Activated B cell treated with CpG ODN at 0.5 μM for 24 hours (primary cell): ENCODE measurements at regions of chr12 and their contacts with region 1.

Region 1: DNA sequence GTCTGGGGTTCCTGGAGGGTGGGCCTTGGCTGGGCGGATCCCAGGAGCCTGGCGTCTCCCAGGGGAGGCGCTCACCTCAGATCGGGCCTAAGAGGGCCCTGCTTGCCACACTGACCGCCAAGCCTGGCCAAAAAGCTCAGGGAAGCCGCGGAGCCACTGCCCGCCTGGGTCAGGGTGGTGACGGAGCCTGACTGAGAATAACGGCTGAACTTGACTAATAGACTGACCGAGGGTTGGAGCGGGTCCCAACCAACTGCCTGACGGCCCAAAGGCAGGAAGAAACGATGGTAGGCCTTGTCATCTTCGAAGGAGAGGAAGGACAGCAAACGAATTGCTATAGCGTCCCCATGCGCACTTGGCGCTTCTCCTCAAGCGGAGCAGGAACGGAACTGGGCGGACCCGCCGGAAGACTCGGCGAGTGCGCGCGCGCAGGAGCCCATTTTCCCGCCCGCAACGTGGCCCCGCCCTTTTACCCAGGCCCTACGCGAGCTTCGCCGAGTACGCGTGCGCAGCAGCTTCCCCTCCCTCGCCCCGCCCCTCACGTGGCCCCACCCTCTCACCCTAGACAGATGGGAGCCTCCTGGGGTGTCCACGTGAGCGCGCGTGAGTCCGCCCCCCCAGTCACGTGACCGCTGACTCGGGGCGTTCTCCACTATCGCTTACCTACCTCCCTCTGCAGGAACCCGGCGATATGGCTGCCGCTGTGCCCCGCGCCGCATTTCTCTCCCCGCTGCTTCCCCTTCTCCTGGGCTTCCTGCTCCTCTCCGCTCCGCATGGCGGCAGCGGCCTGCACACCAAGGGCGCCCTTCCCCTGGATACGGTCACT is at the starts of genes ERP29 and TMEM116:
- DNase-seq: peak; percentile 99
- ATAC-seq: peak; percentile 72
- H3K4me3 Mint-ChIP-seq: peak within 1 kb of the TSS; percentile 96
- H3K27ac Mint-ChIP-seq: peak within 1 kb of the TSS; percentile 99
- H3K4me1 Mint-ChIP-seq: peaks cover 63% of the 10 kb centered on the region
- H3K27me3 Mint-ChIP-seq: no peaks in the 10 kb centered on the region
- CTCF ChIP-seq: no peak
- total RNA-seq, gene ERP29: 133 and 135 TPM in 2 replicates
- total RNA-seq, gene TMEM116: 6.4 and 10.5 TPM in 2 replicates

Region 2: DNA sequence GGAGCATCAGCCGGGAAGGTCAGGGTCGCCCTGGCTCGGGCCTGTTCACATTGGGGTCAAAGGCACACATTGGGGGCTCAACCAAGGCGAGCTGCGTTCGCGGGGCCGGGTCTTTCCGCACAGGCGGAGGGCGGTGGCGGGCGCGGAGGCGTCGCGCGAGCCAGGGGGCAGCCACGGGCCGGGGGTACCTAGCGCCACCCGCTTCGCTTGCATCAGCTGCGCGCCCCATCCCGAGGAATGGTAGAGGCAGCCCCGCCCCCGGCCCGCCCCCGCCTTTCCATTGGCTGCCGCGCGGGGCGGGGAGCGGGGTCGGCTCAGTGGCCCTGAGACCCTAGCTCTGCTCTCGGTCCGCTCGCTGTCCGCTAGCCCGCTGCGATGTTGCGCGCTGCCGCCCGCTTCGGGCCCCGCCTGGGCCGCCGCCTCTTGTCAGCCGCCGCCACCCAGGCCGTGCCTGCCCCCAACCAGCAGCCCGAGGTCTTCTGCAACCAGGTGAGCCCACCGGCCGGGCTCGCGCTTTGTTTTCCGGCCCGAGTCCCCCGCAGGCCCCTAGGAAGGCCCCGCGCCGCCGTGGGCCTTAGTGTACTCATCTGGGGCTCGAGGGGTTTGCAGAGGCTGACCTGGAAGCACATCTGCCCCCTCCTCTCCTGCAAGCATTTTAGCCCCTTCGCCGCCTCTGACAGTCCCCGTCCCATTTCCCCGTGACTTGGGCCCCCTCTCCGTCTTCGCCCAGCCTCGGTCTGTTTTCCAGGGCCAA is 246.2 kb before region 1 on chr12 and contains the start of gene ALDH2:
- CTCF ChIA-PET with region 1: no interaction called
- POLR2A ChIA-PET with region 1: interaction called, 16 read pairs
- intact Hi-C with region 1: loop called (anchors 5 kb)
- DNase-seq: peak; percentile 60
- ATAC-seq: peak; percentile 68
- H3K4me3 Mint-ChIP-seq: peak within 1 kb of the TSS; percentile 87
- H3K27ac Mint-ChIP-seq: peak within 1 kb of the TSS; percentile 88
- H3K4me1 Mint-ChIP-seq: peaks cover 55% of the 10 kb centered on the region
- H3K27me3 Mint-ChIP-seq: no peaks in the 10 kb centered on the region
- CTCF ChIP-seq: no peak
- total RNA-seq, gene ALDH2: 36.0 and 37.4 TPM in 2 replicates

Region 3: GRCh38 chr12:111942557-111942956 is 70.4 kb before region 1 on chr12:
- CTCF ChIA-PET with region 1: interaction called, 13 read pairs
- POLR2A ChIA-PET with region 1: interaction called, 37 read pairs
- intact Hi-C with region 1: loop called (anchors 1 kb)
- DNase-seq: no peak
- ATAC-seq: no peak
- H3K4me3 Mint-ChIP-seq: no peak overlapping the region
- H3K27ac Mint-ChIP-seq: no peak overlapping the region
- H3K4me1 Mint-ChIP-seq: peaks cover 2% of the 10 kb centered on the region
- H3K27me3 Mint-ChIP-seq: no peaks in the 10 kb centered on the region
- CTCF ChIP-seq: no peak

Region 4: DNA sequence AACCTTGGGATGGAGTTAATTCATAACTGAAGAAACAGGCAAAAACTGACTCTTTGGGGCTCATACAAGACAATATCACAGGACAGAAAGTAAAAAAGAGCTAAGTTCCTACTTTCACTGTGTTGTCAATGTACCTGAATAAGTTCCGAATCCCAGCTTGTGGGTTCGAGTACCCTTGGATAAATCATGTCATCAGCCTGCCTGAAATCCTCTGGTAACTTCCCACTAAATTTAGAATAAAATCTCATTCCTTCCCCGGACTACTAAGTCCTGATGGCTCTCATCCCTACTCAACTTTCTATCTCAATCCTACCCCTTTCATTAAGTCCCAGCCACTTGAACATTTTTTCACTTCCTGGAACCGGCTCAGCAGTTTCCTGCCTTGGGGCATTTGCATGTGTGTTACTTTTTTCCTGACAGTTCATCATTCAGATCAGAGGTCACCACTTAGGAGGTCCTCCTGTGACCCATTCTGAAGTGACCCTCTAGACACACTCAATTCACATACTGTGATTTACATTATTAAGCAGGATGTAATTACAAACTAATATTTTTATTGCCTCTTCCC is 12.9 kb after region 1 on chr12:
- CTCF ChIA-PET with region 1: interaction called, 3 read pairs
- POLR2A ChIA-PET with region 1: interaction called, 5 read pairs
- intact Hi-C with region 1: loop called (anchors 2 kb)
- DNase-seq: no peak
- ATAC-seq: peak; percentile 56
- H3K4me3 Mint-ChIP-seq: peak overlapping the region; percentile 40
- H3K27ac Mint-ChIP-seq: peak overlapping the region; percentile 77
- H3K4me1 Mint-ChIP-seq: peaks cover 25% of the 10 kb centered on the region
- H3K27me3 Mint-ChIP-seq: no peaks in the 10 kb centered on the region
- CTCF ChIP-seq: no peak

Region 5: DNA sequence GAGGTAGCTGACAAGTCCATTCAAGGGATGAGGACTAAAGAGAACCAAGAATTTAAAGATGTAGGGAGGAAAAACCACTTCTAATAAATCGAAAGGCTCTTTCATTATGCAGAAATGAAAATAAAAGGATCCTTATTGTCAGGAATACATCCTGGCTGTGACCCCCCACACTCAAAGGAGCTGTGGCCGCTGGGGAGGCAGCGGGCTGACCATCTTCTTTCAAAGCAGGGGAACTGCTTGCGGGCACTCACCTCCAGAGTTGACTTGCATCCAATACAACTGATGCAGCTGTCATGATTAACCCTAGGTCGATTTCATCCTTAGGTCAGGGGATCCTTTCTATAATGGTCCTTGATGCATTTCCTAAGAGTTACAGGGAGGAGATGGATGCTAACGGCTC is 147.6 kb after region 1 on chr12:
- CTCF ChIA-PET with region 1: no interaction called
- POLR2A ChIA-PET with region 1: interaction called, 13 read pairs
- intact Hi-C with region 1: no loop called
- DNase-seq: no peak
- ATAC-seq: no peak
- H3K4me3 Mint-ChIP-seq: no peak overlapping the region
- H3K27ac Mint-ChIP-seq: peak overlapping the region; percentile 59
- H3K4me1 Mint-ChIP-seq: peaks cover 31% of the 10 kb centered on the region
- H3K27me3 Mint-ChIP-seq: no peaks in the 10 kb centered on the region
- CTCF ChIP-seq: no peak

Region 6: DNA sequence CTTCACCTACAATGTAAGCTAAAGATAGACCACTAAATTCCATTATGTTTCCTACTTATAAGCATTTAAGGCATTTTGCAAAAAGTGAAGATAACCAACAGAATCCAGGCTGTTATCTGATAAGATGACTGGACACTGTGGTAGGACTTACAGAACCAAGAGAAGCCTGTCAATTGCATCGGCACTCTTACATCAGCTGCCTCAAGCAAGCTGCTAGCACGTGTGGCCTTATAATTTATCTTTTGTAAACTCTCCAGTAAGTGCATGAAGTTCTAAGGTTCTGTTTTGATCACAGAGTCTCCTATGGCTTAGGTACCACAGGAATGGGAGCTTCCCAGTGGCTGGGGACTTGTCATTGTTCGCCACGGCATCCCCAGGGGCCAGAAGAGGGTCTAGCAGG is 201.1 kb after region 1 on chr12:
- CTCF ChIA-PET with region 1: no interaction called
- POLR2A ChIA-PET with region 1: no interaction called
- intact Hi-C with region 1: no loop called
- DNase-seq: no peak
- ATAC-seq: no peak
- H3K4me3 Mint-ChIP-seq: no peak overlapping the region
- H3K27ac Mint-ChIP-seq: peak overlapping the region; percentile 60
- H3K4me1 Mint-ChIP-seq: peaks cover 40% of the 10 kb centered on the region
- H3K27me3 Mint-ChIP-seq: no peaks in the 10 kb centered on the region
- CTCF ChIP-seq: no peak